CD8-positive, alpha-beta memory T cell (primary cell): ENCODE measurements at regions of chr12 and their contacts with region 1.

Region 1: GRCh38 chr12:56468216-56469006 is at the start of gene SPRYD4:
- DNase-seq: peak; percentile 90 to 96 (median 94)
- H3K4me3 ChIP-seq: peak within 1 kb of the TSS; percentile 100
- H3K4me3 Mint-ChIP-seq: peak within 1 kb of the TSS; percentile 95 to 98 (median 96)
- H3K27ac ChIP-seq: peak within 1 kb of the TSS; percentile 94
- H3K27ac Mint-ChIP-seq: peak within 1 kb of the TSS; percentile 94 to 99 (median 98)
- H3K4me1 ChIP-seq: peaks cover 15% of the 10 kb centered on the region
- H3K4me1 Mint-ChIP-seq: peaks cover 23 to 52% (median 42%) of the 10 kb centered on the region in 3 donors
- H3K27me3 ChIP-seq: no peaks in the 10 kb centered on the region
- H3K27me3 Mint-ChIP-seq: no peaks in the 10 kb centered on the region
- total RNA-seq, gene SPRYD4: 3.7 to 3.9 TPM

Region 2: GRCh38 chr12:56333679-56334489 is 134.5 kb before region 1 on chr12 and contains the start of gene PAN2:
- CTCF ChIA-PET with region 1: interaction called, 11 read pairs
- POLR2A ChIA-PET with region 1: no interaction called
- DNase-seq: peak; percentile 88 to 95 (median 94)
- H3K4me3 ChIP-seq: peak within 1 kb of the TSS; percentile 94
- H3K4me3 Mint-ChIP-seq: peak within 1 kb of the TSS; percentile 96 to 99 (median 97)
- H3K27ac ChIP-seq: peak within 1 kb of the TSS; percentile 99
- H3K27ac Mint-ChIP-seq: peak within 1 kb of the TSS; percentile 100
- H3K4me1 ChIP-seq: peaks cover 30% of the 10 kb centered on the region
- H3K4me1 Mint-ChIP-seq: peaks cover 30 to 53% (median 49%) of the 10 kb centered on the region in 3 donors
- H3K27me3 ChIP-seq: no peaks in the 10 kb centered on the region
- H3K27me3 Mint-ChIP-seq: peaks cover 0 to 5% of the 10 kb centered on the region in 2 donors
- total RNA-seq, gene PAN2: 36.6 to 40.4 TPM

Region 3: GRCh38 chr12:56359851-56360767 is 108.3 kb before region 1 on chr12 and contains the start of gene STAT2:
- CTCF ChIA-PET with region 1: interaction called, 29 read pairs
- POLR2A ChIA-PET with region 1: interaction called, 12 read pairs
- DNase-seq: peak; percentile 99 to 100 (median 99)
- H3K4me3 ChIP-seq: peak within 1 kb of the TSS; percentile 96
- H3K4me3 Mint-ChIP-seq: peak within 1 kb of the TSS; percentile 90 to 99 (median 96)
- H3K27ac ChIP-seq: peak within 1 kb of the TSS; percentile 91
- H3K27ac Mint-ChIP-seq: peak within 1 kb of the TSS; percentile 61 to 98 (median 96)
- H3K4me1 ChIP-seq: peaks cover 28% of the 10 kb centered on the region
- H3K4me1 Mint-ChIP-seq: peaks cover 26 to 45% (median 33%) of the 10 kb centered on the region in 3 donors
- H3K27me3 ChIP-seq: no peaks in the 10 kb centered on the region
- H3K27me3 Mint-ChIP-seq: no peaks in the 10 kb centered on the region
- total RNA-seq, gene STAT2: 61.6 to 63.5 TPM

Region 4: DNA sequence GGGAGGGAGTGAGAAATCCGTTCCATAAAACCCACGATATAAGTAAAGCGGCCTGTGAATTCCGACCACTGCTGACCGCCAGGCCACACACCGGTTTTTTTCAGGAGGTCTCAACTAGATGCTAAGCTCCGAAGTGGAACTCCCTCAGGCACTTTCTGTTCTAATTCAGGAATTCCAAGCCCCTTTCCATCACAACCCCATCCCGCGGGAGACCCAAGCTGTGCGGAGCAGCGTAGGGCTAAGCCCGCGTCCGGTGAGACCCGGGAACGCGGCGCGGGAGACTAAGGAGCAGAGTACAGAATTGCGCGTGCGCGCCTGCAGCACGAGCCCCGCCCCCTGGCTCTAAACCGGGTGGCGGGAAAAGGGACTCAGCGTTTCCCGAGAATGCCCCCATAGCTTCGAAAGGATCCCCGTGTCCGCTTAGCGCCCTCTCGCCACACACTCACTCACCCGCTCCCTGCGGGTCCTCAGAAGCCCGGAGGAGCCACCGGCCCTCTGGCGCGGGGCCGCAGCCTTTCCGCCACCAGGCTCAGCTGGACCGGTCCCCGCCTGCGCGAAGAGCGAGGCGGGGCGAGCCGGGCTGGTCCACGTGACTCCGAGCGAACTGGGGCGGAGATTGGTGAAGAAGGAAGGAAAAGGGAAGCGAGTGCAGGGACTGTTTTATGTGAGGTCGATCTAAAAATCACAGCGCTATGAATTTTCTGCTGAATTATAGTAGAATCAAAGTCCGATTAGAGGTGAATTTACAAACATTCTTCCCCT is 19.4 kb before region 1 on chr12 and contains the start of gene TIMELESS:
- CTCF ChIA-PET with region 1: interaction called, 27 read pairs
- POLR2A ChIA-PET with region 1: interaction called, 4 read pairs
- DNase-seq: peak; percentile 78 to 88 (median 84)
- H3K4me3 ChIP-seq: peak within 1 kb of the TSS; percentile 92
- H3K4me3 Mint-ChIP-seq: peak within 1 kb of the TSS; percentile 91 to 96 (median 93)
- H3K27ac ChIP-seq: peak within 1 kb of the TSS; percentile 66
- H3K27ac Mint-ChIP-seq: peak within 1 kb of the TSS; percentile 60 to 98 (median 95)
- H3K4me1 ChIP-seq: peaks cover 8% of the 10 kb centered on the region
- H3K4me1 Mint-ChIP-seq: peaks cover 14 to 18% (median 16%) of the 10 kb centered on the region in 3 donors
- H3K27me3 ChIP-seq: no peaks in the 10 kb centered on the region
- H3K27me3 Mint-ChIP-seq: no peaks in the 10 kb centered on the region
- total RNA-seq, gene TIMELESS: 61.9 to 64.1 TPM

Region 5: GRCh38 chr12:56565510-56566101 is 97.2 kb after region 1 on chr12:
- CTCF ChIA-PET with region 1: no interaction called
- POLR2A ChIA-PET with region 1: no interaction called
- DNase-seq: peak in 1 of 5 donors; percentile 15
- H3K4me3 ChIP-seq: no peak overlapping the region
- H3K4me3 Mint-ChIP-seq: peak overlapping the region in 4 of 7 donors; percentile 19 to 63 (median 35)
- H3K27ac ChIP-seq: no peak overlapping the region
- H3K27ac Mint-ChIP-seq: peak overlapping the region in 6 of 8 donors; percentile 14 to 79 (median 51)
- H3K4me1 ChIP-seq: peaks cover 22% of the 10 kb centered on the region
- H3K4me1 Mint-ChIP-seq: peaks cover 14 to 21% (median 14%) of the 10 kb centered on the region in 3 donors
- H3K27me3 ChIP-seq: no peaks in the 10 kb centered on the region
- H3K27me3 Mint-ChIP-seq: no peaks in the 10 kb centered on the region

Region 6: DNA sequence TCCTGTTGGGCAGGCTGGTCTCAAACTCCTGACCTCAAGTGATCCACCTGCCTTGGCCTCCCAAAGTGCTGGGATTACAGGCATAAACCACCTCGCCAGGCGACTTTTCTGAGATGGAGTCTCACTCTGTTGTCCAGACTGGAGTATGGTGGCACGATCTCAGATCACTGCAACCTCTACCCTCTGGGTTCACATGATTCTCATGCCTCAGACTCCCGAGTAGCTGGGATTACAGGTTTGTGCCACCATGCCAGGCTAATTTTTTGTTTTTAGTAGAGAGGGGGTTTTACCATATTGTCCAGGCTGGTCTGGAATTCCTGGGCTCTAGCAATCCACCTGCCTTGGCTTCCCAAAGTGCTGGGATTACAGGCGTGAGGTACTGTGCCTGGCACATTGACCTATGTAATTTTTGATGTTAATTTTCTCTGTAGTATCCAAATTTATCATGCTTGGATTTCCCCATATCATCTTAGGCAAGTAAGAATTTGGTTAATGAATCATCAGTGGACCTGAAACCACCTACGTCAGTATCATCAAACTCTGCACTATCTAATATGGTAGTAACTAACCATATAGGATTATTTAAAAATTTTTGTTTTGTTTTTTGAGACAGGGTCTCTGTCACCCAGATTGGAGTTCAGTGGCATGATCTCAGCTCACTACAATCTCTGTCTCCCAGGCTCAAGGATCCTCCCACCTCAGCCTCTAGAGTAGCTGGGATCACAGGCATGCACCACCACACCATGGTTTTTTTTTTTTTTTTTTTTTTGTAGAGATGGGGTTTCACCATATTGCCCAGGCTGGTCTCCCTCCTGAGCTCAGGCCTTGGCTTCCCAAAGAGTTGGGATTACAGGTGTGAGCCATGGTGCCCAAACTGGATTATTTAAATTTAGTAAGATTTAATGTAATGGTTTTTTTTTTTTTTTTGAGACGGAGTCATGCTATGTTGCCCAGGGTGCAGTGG is 189.3 kb after region 1 on chr12:
- CTCF ChIA-PET with region 1: no interaction called
- POLR2A ChIA-PET with region 1: no interaction called
- DNase-seq: no peak
- H3K4me3 ChIP-seq: no peak overlapping the region
- H3K4me3 Mint-ChIP-seq: no peak overlapping the region
- H3K27ac ChIP-seq: no peak overlapping the region
- H3K27ac Mint-ChIP-seq: peak overlapping the region in 2 of 8 donors; percentile 21 to 65
- H3K4me1 ChIP-seq: no peaks in the 10 kb centered on the region
- H3K4me1 Mint-ChIP-seq: peaks cover 1 to 5% (median 4%) of the 10 kb centered on the region in 3 donors
- H3K27me3 ChIP-seq: no peaks in the 10 kb centered on the region
- H3K27me3 Mint-ChIP-seq: no peaks in the 10 kb centered on the region

Region 7: GRCh38 chr12:56792678-56793077 is 324.3 kb after region 1 on chr12:
- CTCF ChIA-PET with region 1: no interaction called
- POLR2A ChIA-PET with region 1: no interaction called
- DNase-seq: no peak
- H3K4me3 ChIP-seq: no peak overlapping the region
- H3K4me3 Mint-ChIP-seq: no peak overlapping the region
- H3K27ac ChIP-seq: no peak overlapping the region
- H3K27ac Mint-ChIP-seq: no peak overlapping the region
- H3K4me1 ChIP-seq: no peaks in the 10 kb centered on the region
- H3K4me1 Mint-ChIP-seq: peaks cover 0 to 3% (median 0%) of the 10 kb centered on the region in 3 donors
- H3K27me3 ChIP-seq: no peaks in the 10 kb centered on the region
- H3K27me3 Mint-ChIP-seq: peaks cover 2 to 5% of the 10 kb centered on the region in 2 donors

Region 8: DNA sequence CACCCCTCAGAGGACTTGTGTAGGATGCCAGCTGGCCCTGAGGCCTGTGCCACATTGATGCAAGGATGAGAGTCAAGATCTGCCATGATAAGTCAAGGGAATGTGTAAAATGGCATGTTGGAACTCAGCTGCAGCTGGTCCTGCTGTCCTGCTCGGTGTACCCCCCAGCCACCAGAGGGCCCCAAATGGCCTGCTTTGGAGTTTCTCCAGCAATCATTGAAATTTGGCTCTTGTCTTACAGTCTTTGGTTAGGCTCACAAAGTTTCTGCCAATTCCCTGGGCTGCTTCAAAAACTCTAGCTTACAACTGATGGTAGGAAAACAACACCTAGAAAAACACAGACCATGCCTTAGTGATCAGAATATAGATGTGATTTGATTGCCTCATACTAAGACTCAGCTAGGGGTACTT is 371.5 kb after region 1 on chr12:
- CTCF ChIA-PET with region 1: no interaction called
- POLR2A ChIA-PET with region 1: no interaction called
- DNase-seq: peak in 1 of 5 donors; percentile 4
- H3K4me3 ChIP-seq: no peak overlapping the region
- H3K4me3 Mint-ChIP-seq: no peak overlapping the region
- H3K27ac ChIP-seq: no peak overlapping the region
- H3K27ac Mint-ChIP-seq: peak overlapping the region in 1 of 8 donors; percentile 33
- H3K4me1 ChIP-seq: peaks cover 14% of the 10 kb centered on the region
- H3K4me1 Mint-ChIP-seq: peaks cover 15 to 17% (median 16%) of the 10 kb centered on the region in 3 donors
- H3K27me3 ChIP-seq: no peaks in the 10 kb centered on the region
- H3K27me3 Mint-ChIP-seq: peaks cover 7 to 9% of the 10 kb centered on the region in 2 donors